ENCODE measurements at regions of chr16 and their contacts with region 1.

Region 1: GRCh38 chr16:23877107-23878090 is 41.6 kb downstream of the PRKCB start:
- H3K4me3 Mint-ChIP-seq: no peak overlapping the region
- H3K27ac Mint-ChIP-seq: peak overlapping the region; percentile 10
- H3K4me1 Mint-ChIP-seq: peaks cover 72% of the 10 kb centered on the region
- H3K27me3 Mint-ChIP-seq: no peaks in the 10 kb centered on the region

Region 2: GRCh38 chr16:23826528-23827045 is 50.8 kb before region 1 on chr16:
- intact Hi-C with region 1: loop called (anchors 1 kb)
- H3K4me3 Mint-ChIP-seq: no peak overlapping the region
- H3K27ac Mint-ChIP-seq: no peak overlapping the region
- H3K4me1 Mint-ChIP-seq: peaks cover 30% of the 10 kb centered on the region
- H3K27me3 Mint-ChIP-seq: peaks cover 10% of the 10 kb centered on the region

Region 3: DNA sequence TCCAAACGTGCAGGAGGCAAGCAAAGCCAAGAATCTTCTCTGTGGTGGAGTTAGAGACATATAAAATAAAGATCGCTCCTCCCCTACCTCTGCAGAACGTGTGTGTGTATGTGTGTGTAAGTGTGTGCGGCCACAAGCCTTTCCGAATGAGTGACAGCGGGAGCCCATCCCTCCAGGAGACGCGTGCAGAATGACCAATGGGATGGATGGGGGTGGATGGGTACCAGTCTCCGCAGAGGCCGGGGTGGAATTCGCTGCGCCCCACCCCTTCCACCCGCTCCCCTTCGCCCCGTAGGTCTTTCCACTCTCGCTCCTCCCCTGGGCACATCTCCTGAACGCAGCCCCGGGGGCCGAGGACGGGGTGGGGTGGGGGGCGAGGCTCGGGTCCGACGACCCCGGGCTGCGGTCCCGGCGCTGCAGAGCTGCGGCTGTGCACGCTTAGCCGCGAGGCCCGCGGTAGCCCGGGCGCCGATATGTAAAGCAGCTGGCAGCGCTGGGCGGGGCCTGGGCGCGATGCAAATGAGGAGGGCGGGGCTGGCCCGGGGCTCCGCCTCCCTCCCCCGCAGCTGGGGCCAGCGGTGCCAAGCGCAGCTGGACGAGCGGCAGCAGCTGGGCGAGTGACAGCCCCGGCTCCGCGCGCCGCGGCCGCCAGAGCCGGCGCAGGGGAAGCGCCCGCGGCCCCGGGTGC is 41.9 kb before region 1 on chr16 and contains the start of gene PRKCB:
- intact Hi-C with region 1: loop called (anchors 1 kb)
- H3K4me3 Mint-ChIP-seq: peak within 1 kb of the TSS; percentile 82
- H3K27ac Mint-ChIP-seq: peak within 1 kb of the TSS; percentile 64
- H3K4me1 Mint-ChIP-seq: peaks cover 37% of the 10 kb centered on the region
- H3K27me3 Mint-ChIP-seq: peaks cover 25% of the 10 kb centered on the region

Region 4: DNA sequence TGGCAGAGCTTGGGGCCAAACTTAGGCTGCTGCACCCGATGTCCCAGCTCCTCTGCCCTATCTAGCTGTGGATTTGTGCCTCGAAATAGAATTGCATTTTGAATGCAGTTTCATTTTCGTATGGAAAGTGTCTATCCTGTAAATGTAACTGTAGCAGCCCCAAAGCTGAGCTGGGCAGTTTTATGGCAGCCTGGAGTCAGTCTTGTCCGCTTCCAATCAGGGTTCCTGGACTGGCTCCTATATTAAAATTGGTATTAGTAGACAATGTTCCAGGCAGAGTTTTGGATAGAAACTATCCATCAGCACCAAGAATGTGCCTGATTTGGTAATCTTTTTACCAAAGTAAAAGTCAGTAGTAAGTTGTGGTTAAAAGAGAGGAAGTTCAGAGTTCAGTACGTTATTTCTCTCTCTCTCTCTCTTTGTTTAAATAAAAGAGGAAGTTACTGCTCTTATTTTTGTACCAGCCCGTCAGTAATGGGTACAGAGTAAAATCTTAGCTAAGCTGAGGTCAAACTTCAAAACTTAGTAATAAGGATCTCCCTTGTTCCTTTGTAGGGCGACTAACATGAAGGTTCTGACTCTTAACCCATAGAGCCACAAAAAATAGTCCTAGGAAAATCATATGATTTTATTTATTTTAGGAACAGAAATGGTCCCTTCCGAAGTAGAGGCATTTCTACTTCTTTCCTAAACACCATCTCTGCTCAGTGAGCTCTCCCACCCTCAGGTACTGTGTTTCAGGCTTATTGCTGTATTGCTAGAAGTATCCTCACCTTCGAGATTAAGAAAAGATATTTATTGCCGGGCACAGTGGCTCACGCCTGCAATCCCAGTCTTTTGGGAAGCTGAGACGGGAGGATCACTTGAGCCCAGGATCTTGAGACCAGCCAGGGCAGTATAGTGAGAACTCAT is 13.6 kb before region 1 on chr16:
- intact Hi-C with region 1: loop called (anchors 2 kb)
- H3K4me3 Mint-ChIP-seq: peak overlapping the region; percentile 65
- H3K27ac Mint-ChIP-seq: peak overlapping the region; percentile 72
- H3K4me1 Mint-ChIP-seq: peaks cover 76% of the 10 kb centered on the region
- H3K27me3 Mint-ChIP-seq: no peaks in the 10 kb centered on the region

Region 5: GRCh38 chr16:23952128-23952970 is 75.0 kb after region 1 on chr16:
- intact Hi-C with region 1: loop called (anchors 10 kb)
- H3K4me3 Mint-ChIP-seq: no peak overlapping the region
- H3K27ac Mint-ChIP-seq: peak overlapping the region; percentile 68
- H3K4me1 Mint-ChIP-seq: peaks cover 63% of the 10 kb centered on the region
- H3K27me3 Mint-ChIP-seq: no peaks in the 10 kb centered on the region

Region 6: GRCh38 chr16:24010440-24011089 is 133.2 kb after region 1 on chr16:
- intact Hi-C with region 1: loop called (anchors 5 kb)
- H3K4me3 Mint-ChIP-seq: no peak overlapping the region
- H3K27ac Mint-ChIP-seq: no peak overlapping the region
- H3K4me1 Mint-ChIP-seq: peaks cover 50% of the 10 kb centered on the region
- H3K27me3 Mint-ChIP-seq: no peaks in the 10 kb centered on the region